ENCODE measurements at regions of chr3 and their contacts with region 1.

Region 1: GRCh38 chr3:128607710-128608048 is 42.9 kb downstream of the RPN1 start:
- DNase-seq: no peak
- H3K4me3 Mint-ChIP-seq: no peak overlapping the region
- H3K27ac Mint-ChIP-seq: no peak overlapping the region
- H3K4me1 Mint-ChIP-seq: no peaks in the 10 kb centered on the region
- H3K27me3 Mint-ChIP-seq: no peaks in the 10 kb centered on the region
- CTCF ChIP-seq: no peak

Region 2: GRCh38 chr3:128426128-128426921 is 181.4 kb before region 1 on chr3:
- CTCF ChIA-PET with region 1: interaction called, 67 read pairs
- POLR2A ChIA-PET with region 1: no interaction called
- intact Hi-C with region 1: no loop called
- DNase-seq: peak; percentile 30
- H3K4me3 Mint-ChIP-seq: no peak overlapping the region
- H3K27ac Mint-ChIP-seq: no peak overlapping the region
- H3K4me1 Mint-ChIP-seq: no peaks in the 10 kb centered on the region
- H3K27me3 Mint-ChIP-seq: peaks cover 35% of the 10 kb centered on the region
- CTCF ChIP-seq: peak; percentile 92

Region 3: DNA sequence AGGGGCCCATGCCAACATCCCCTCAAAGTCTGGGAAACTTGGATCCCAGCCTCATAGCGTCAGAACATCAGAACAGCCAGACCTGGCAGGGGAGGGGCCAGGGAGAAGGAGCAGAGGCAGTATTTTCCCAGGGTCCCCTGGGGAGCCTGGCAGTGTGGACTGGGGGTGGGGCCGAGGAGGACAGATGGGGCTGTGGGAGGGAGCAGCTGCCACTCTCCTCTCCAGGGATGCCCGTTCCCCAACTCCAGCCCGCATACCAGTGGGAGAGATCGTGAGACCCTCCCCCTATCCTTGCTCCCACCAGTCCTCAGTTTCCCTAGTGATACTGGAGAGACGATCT is 134.5 kb before region 1 on chr3:
- CTCF ChIA-PET with region 1: no interaction called
- POLR2A ChIA-PET with region 1: no interaction called
- intact Hi-C with region 1: no loop called
- DNase-seq: no peak
- H3K4me3 Mint-ChIP-seq: no peak overlapping the region
- H3K27ac Mint-ChIP-seq: no peak overlapping the region
- H3K4me1 Mint-ChIP-seq: no peaks in the 10 kb centered on the region
- H3K27me3 Mint-ChIP-seq: peaks cover 66% of the 10 kb centered on the region
- CTCF ChIP-seq: no peak

Region 4: GRCh38 chr3:128549283-128550112 is 58.2 kb before region 1 on chr3:
- CTCF ChIA-PET with region 1: no interaction called
- POLR2A ChIA-PET with region 1: no interaction called
- intact Hi-C with region 1: no loop called
- DNase-seq: peak; percentile 90
- H3K4me3 Mint-ChIP-seq: no peak overlapping the region
- H3K27ac Mint-ChIP-seq: peak overlapping the region; percentile 42
- H3K4me1 Mint-ChIP-seq: peaks cover 16% of the 10 kb centered on the region
- H3K27me3 Mint-ChIP-seq: peaks cover 12% of the 10 kb centered on the region
- CTCF ChIP-seq: no peak

Region 5: GRCh38 chr3:128617557-128618397 is 10.1 kb after region 1 on chr3:
- CTCF ChIA-PET with region 1: interaction called, 34 read pairs
- POLR2A ChIA-PET with region 1: no interaction called
- intact Hi-C with region 1: no loop called
- DNase-seq: peak; percentile 81
- H3K4me3 Mint-ChIP-seq: peak overlapping the region; percentile 90
- H3K27ac Mint-ChIP-seq: peak overlapping the region; percentile 96
- H3K4me1 Mint-ChIP-seq: peaks cover 18% of the 10 kb centered on the region
- H3K27me3 Mint-ChIP-seq: no peaks in the 10 kb centered on the region
- CTCF ChIP-seq: peak; percentile 64

Region 6: DNA sequence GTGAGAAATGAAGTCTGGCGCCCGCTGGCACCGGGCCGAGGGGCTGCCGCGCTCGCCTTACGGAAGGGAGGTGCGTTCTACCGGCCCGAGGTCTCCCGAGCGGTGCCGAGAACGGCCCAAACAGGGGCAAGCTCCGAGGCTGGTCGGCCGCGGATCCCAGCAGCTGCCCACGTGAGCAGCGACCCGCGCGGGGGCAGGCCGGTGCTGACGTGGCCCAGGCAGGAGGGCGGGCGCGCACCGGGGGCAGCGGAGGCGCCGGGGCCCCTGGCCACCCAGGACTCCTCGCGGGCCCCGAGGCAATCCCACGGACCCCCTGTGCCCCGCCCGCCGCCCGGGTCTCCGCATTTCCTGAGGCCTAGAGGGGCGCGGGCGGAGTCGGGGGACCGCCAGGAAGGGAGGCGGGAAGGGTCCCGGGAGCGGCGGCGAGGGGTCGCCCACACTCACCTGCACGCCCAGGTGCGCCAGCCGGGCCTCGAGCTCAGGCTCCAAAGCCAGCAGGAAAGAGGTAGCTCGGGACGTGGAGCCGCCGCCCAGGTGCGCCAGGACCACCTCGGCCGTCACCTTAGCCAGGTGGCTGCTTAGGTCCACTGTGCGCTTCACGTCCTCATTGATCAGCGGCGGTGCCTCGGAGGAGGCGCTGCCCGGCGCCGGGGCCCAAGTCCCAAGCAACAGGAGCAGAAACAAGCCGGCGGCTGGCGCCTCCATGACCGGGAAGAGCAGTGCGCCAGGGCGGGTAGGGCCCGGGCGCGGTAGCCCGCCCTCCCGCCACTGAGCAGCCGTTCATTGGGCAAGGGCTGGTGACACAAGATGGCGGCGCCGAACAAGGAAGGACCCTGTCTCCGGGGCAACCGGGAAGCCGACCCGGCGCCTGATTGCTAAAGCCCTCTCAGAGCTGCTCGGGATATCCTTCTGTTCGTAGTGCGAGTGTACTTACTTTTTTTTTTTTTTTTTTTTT is 42.7 kb after region 1 on chr3 and contains the start of gene RPN1:
- CTCF ChIA-PET with region 1: interaction called, 11 read pairs
- POLR2A ChIA-PET with region 1: interaction called, 3 read pairs
- intact Hi-C with region 1: no loop called
- DNase-seq: peak; percentile 94
- H3K4me3 Mint-ChIP-seq: peak within 1 kb of the TSS; percentile 80
- H3K27ac Mint-ChIP-seq: peak within 1 kb of the TSS; percentile 89
- H3K4me1 Mint-ChIP-seq: no peaks in the 10 kb centered on the region
- H3K27me3 Mint-ChIP-seq: no peaks in the 10 kb centered on the region
- CTCF ChIP-seq: no peak
- total RNA-seq, gene RPN1: 212 and 240 TPM in 2 replicates